Transverse colon (tissue), 4 donors: ENCODE measurements at regions of chr10 and their contacts with region 1.

Region 1: GRCh38 chr10:62545160-62546066 is 171.2 kb downstream of the ZNF365 start:
- DNase-seq: no peak
- H3K4me3 ChIP-seq: no peak overlapping the region
- H3K27ac ChIP-seq: peak overlapping the region in 3 of 4 donors; percentile 18 to 49 (median 41)
- H3K4me1 ChIP-seq: peaks cover 0 to 3% (median 0%) of the 10 kb centered on the region in 4 donors
- H3K27me3 ChIP-seq: no peaks in the 10 kb centered on the region
- CTCF ChIP-seq: no peak
- EP300 ChIP-seq: no peak
- POLR2A ChIP-seq: no peak

Region 2: GRCh38 chr10:62399211-62399610 is 146.2 kb before region 1 on chr10:
- in situ Hi-C with region 1: no loop called
- intact Hi-C with region 1: no loop called
- DNase-seq: no peak
- H3K4me3 ChIP-seq: no peak overlapping the region
- H3K27ac ChIP-seq: no peak overlapping the region
- H3K4me1 ChIP-seq: no peaks in the 10 kb centered on the region
- H3K27me3 ChIP-seq: no peaks in the 10 kb centered on the region
- CTCF ChIP-seq: no peak
- EP300 ChIP-seq: no peak
- POLR2A ChIP-seq: no peak

Region 3: DNA sequence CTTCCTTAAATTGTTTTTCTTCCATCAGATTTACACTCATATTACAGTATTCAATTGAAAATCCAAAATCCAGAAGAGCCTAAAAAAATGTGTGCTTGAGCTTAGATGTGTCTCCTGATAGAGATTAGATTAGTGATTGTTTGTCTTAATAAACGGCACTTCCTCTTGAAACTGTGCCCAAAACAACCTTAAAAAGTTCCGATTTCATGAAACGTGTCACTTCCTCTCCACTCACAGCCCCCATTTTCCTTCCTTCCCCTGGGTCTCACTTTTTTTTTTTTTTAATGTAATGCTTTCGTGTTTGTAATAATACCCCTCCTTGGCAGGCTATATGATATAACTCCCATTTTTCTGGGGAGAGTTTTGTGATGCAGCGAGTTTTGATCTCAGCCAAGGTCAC is 144.3 kb after region 1 on chr10:
- in situ Hi-C with region 1: no loop called
- intact Hi-C with region 1: no loop called
- DNase-seq: no peak
- H3K4me3 ChIP-seq: no peak overlapping the region
- H3K27ac ChIP-seq: no peak overlapping the region
- H3K4me1 ChIP-seq: peaks cover 0 to 7% (median 0%) of the 10 kb centered on the region in 4 donors
- H3K27me3 ChIP-seq: no peaks in the 10 kb centered on the region
- CTCF ChIP-seq: no peak
- EP300 ChIP-seq: no peak
- POLR2A ChIP-seq: no peak

Region 4: DNA sequence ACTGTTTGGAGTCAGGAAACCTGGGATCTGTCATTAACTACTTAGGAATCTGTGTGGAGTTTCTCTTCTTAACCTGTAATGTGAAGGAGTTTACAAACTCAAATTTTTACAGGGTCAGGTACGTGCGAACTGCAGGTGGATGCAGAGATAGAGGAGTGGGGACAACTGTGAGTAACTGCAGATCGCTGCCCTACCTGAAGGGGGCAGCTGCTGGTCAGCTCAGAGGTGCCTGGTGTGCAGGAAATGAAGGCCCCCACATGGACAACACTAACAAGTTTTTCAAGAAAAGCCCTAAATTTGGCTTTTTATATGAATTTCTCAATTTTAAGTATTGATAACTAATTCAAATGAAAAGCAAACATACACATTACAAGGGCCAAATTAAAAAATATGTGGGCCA is 1355.8 kb after region 1 on chr10:
- in situ Hi-C with region 1: no loop called
- intact Hi-C with region 1: loop called (anchors 5 kb)
- DNase-seq: no peak
- H3K4me3 ChIP-seq: no peak overlapping the region
- H3K27ac ChIP-seq: no peak overlapping the region
- H3K4me1 ChIP-seq: no peaks in the 10 kb centered on the region
- H3K27me3 ChIP-seq: no peaks in the 10 kb centered on the region
- CTCF ChIP-seq: no peak
- EP300 ChIP-seq: no peak
- POLR2A ChIP-seq: no peak